Mammary epithelial cell (primary cell): ENCODE measurements at regions of chr3 and their contacts with region 1.

Region 1: DNA sequence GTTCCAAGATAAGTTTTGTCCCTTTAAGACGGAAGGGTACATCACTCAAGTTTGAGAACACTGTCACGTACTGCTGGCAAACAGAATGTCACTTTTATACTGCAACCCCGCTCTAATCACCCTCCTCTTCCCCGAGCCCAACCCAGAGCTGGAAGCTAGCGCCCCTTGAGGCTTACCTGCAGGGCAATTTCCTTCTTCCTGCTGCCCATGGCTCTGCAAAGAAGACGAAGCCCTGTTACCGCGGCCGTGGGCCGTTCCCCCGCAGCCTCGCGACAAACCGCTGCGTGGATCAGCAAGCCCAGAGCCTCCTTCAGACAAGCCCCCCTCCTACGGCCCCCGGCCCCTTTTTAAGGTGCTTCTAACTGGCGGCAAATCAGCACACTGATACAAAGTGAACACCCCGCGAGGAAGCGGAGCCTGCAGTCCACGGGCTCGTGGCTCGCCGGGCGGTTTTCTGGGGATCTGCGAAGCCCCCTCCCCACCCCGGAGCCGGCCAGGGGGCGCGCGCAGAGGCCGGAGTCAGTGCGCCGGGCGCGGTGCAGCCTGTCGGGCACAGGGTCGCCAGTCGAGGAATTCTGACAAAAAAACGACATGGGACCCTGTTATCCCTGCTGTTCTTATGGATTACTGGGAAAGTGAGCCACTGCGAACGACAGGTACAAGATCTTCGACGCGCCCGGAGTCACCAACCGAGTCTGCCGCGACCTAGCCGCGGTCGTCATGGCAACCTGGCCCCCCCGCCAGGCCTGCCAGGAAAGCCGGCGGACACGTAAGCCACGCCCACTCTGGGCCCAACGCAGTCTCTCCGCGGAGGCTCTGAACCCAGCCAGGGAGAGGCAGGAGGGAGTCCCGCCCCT is at the start of gene NME9:
- DNase-seq: peak; percentile 52
- H3K4me3 ChIP-seq: peak within 1 kb of the TSS; percentile 43 to 54 (median 46)
- H3K27ac ChIP-seq: no peak within 1 kb of the TSS
- H3K4me1 ChIP-seq: peaks cover 44% of the 10 kb centered on the region
- H3K27me3 ChIP-seq: no peaks in the 10 kb centered on the region
- CTCF ChIP-seq: peak; percentile 52 to 58
- total RNA-seq, gene NME9: 0.50 TPM in 1 of 2 donors, not detected in the other

Region 2: DNA sequence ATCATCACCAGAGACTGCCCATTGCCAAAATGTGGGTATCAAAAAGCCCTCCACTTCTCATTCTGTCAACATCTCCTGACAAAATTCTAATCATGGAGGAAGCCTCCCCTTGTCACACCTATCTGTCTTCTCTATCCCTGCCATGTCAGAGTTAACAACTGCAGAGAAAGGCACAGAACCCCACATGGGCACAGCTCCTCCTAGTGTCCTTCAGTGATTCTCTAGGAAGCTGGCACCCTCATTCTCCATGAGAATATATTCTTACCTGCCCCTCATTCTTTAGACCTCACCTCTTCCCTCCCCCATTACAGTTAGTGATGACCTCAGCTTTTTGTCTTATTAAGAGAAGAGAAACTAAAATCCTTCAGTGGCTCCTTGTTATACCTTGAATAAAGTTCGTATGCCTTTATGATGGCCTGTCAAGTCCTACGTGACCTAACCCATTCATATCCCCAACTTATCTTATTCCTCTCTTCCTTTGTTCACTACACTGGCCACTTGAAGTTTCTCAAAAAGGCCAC is 44.3 kb before region 1 on chr3:
- CTCF ChIA-PET with region 1: no interaction called
- dilution Hi-C with region 1: no loop called
- in situ Hi-C with region 1: no loop called
- intact Hi-C with region 1: loop called (anchors 5 kb)
- DNase-seq: no peak
- H3K4me3 ChIP-seq: no peak overlapping the region
- H3K27ac ChIP-seq: no peak overlapping the region
- H3K4me1 ChIP-seq: peaks cover 19% of the 10 kb centered on the region
- H3K27me3 ChIP-seq: no peaks in the 10 kb centered on the region
- CTCF ChIP-seq: peak in 1 of 2 donors; percentile 47

Region 3: GRCh38 chr3:138300647-138301046 is 28.7 kb before region 1 on chr3:
- CTCF ChIA-PET with region 1: no interaction called
- dilution Hi-C with region 1: no loop called
- in situ Hi-C with region 1: no loop called
- intact Hi-C with region 1: no loop called
- DNase-seq: no peak
- H3K4me3 ChIP-seq: no peak overlapping the region
- H3K27ac ChIP-seq: no peak overlapping the region
- H3K4me1 ChIP-seq: no peaks in the 10 kb centered on the region
- H3K27me3 ChIP-seq: no peaks in the 10 kb centered on the region
- CTCF ChIP-seq: no peak

Region 4: DNA sequence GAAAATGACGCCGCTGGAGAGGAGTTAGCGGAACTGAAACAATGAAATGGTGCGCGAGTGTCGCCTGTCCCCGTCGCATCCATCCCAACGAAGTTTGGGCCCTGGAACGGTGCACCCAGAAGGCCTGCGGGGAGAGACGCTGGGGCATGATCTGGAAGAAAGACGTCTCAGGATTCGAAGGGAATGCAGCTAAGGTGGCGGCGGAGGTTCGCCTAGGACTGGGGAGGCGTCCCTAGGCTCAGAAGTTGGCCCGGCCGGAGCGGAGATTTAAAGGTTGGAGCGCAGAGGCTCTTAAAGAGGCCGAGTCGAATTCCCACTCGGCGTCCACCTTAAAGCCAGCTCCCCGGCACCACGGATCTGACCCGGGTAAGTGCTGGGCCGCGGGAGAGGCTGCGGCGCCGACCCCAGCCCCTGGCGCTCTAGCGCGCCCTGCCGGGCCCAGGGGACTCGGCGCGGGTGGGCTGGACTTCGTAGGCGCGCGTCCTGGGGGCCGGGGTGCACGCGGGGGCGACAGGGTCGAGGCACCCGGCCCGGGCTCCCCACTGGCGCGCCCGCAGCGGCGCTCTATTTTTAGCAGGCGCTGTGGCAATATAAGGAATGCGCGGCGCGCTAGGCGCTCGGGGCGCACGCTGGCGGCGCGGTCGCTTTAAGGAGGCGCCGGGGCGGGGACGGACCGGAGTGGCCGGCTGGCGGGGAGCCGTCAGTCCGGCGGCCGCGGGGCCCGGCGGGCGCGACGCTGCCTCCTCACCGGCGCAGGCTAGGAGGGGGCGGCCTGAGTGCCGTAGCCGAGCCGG is 18.8 kb after region 1 on chr3 and contains the start of gene MRAS:
- CTCF ChIA-PET with region 1: no interaction called
- dilution Hi-C with region 1: no loop called
- in situ Hi-C with region 1: no loop called
- intact Hi-C with region 1: no loop called
- DNase-seq: peak; percentile 66
- H3K4me3 ChIP-seq: peak within 1 kb of the TSS; percentile 64 to 68 (median 64)
- H3K27ac ChIP-seq: peak within 1 kb of the TSS; percentile 23
- H3K4me1 ChIP-seq: peaks cover 6% of the 10 kb centered on the region
- H3K27me3 ChIP-seq: no peaks in the 10 kb centered on the region
- CTCF ChIP-seq: peak in 1 of 2 donors; percentile 37
- total RNA-seq, gene MRAS: 16.4 to 55.3 TPM

Region 5: GRCh38 chr3:138397983-138398382 is 68.6 kb after region 1 on chr3:
- CTCF ChIA-PET with region 1: no interaction called
- dilution Hi-C with region 1: no loop called
- in situ Hi-C with region 1: no loop called
- intact Hi-C with region 1: loop called (anchors 1 kb)
- DNase-seq: no peak
- H3K4me3 ChIP-seq: no peak overlapping the region
- H3K27ac ChIP-seq: no peak overlapping the region
- H3K4me1 ChIP-seq: no peaks in the 10 kb centered on the region
- H3K27me3 ChIP-seq: no peaks in the 10 kb centered on the region
- CTCF ChIP-seq: peak; percentile 29 to 65

Region 6: GRCh38 chr3:138426226-138426625 is 96.9 kb after region 1 on chr3:
- CTCF ChIA-PET with region 1: no interaction called
- dilution Hi-C with region 1: no loop called
- in situ Hi-C with region 1: no loop called
- intact Hi-C with region 1: loop called (anchors 1 kb)
- DNase-seq: peak; percentile 19
- H3K4me3 ChIP-seq: no peak overlapping the region
- H3K27ac ChIP-seq: no peak overlapping the region
- H3K4me1 ChIP-seq: no peaks in the 10 kb centered on the region
- H3K27me3 ChIP-seq: no peaks in the 10 kb centered on the region
- CTCF ChIP-seq: no peak

Region 7: GRCh38 chr3:138468886-138469285 is 139.5 kb after region 1 on chr3:
- CTCF ChIA-PET with region 1: no interaction called
- dilution Hi-C with region 1: no loop called
- in situ Hi-C with region 1: no loop called
- intact Hi-C with region 1: no loop called
- DNase-seq: peak; percentile 76
- H3K4me3 ChIP-seq: no peak overlapping the region
- H3K27ac ChIP-seq: no peak overlapping the region
- H3K4me1 ChIP-seq: no peaks in the 10 kb centered on the region
- H3K27me3 ChIP-seq: no peaks in the 10 kb centered on the region
- CTCF ChIP-seq: no peak

Region 8: DNA sequence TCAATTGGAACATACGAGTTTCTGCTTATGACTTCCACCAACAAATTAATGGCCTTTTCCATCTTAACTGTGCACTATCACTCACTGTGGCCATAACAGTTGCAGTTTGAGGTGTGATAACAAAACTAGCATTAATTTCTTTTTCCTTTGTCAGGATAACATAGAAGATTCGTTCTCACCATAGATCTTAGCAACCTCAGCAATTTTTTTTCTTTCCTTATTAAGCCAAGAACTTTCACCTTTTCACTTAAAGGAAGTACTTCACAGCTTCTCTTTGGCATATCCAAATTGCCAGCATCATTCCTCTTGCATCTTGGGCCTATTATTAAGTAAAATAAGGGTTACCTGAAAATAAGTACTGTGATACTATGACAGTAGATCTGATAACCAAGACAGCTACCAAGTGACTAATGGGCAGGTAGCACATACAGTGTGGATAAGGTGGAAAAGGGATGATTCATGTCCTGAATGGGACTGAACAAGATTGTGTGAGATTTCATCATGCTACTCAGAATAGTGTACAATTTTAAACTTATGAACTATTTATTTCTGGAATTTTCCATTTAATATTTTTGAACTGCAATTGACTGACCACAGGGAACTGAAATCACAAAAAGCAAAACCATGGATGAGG is 218.1 kb after region 1 on chr3:
- CTCF ChIA-PET with region 1: no interaction called
- dilution Hi-C with region 1: no loop called
- in situ Hi-C with region 1: no loop called
- intact Hi-C with region 1: no loop called
- DNase-seq: peak; percentile 69
- H3K4me3 ChIP-seq: no peak overlapping the region
- H3K27ac ChIP-seq: no peak overlapping the region
- H3K4me1 ChIP-seq: no peaks in the 10 kb centered on the region
- H3K27me3 ChIP-seq: no peaks in the 10 kb centered on the region
- CTCF ChIP-seq: no peak

Region 9: GRCh38 chr3:138935848-138936740 is 606.7 kb after region 1 on chr3:
- CTCF ChIA-PET with region 1: no interaction called
- dilution Hi-C with region 1: no loop called
- in situ Hi-C with region 1: no loop called
- intact Hi-C with region 1: loop called (anchors 5 kb)
- DNase-seq: peak; percentile 39
- H3K4me3 ChIP-seq: peak overlapping the region; percentile 15 to 50 (median 44)
- H3K27ac ChIP-seq: no peak overlapping the region
- H3K4me1 ChIP-seq: peaks cover 19% of the 10 kb centered on the region
- H3K27me3 ChIP-seq: peaks cover 36% of the 10 kb centered on the region
- CTCF ChIP-seq: peak; percentile 63 to 87